IMR-90 (cell line): ENCODE measurements at regions of chr9 and their contacts with region 1.

Region 1: DNA sequence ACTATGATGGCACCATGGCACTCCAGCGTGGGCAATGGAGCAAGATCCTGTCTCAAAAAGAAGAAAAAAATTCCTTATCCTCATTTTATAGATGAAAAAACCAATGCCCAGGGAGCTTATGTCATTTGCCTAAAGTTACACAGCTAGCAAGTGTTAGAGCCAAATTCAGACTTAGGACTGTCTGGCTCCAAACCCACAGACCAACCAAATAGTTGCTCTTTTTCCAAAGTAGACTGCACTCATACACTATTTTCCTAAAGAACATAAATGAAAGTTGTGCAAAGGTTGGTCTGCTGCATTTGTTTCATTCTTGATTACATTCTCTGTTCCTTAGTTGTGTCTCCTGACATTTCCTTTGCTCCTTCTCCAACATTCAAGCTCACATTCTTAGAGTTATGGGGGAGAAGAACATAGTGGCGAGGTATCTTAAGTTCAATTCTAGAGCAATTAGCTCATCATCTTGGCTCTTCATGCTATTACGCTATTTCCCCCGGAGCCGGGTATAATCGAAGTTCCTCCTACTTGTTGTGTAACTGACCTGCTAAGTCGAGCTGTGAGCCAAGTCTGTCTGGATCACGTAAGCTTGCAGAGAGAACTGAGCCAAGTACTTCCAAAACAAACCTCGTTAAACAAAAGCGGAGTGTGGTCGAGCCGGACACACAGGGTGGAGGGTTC is 138.3 kb downstream of the RFK start:
- DNase-seq: peak; percentile 98
- ATAC-seq: peak; percentile 94
- H3K4me3 ChIP-seq: peak overlapping the region; percentile 21; the same call in 1 of the 2 replicates
- H3K27ac ChIP-seq: peak overlapping the region; percentile 90
- H3K4me1 ChIP-seq: peaks cover 7% of the 10 kb centered on the region
- H3K27me3 ChIP-seq: no peaks in the 10 kb centered on the region
- CTCF ChIP-seq: no peak
- POLR2A ChIP-seq: no peak
- RAD21 ChIP-seq: no peak

Region 2: GRCh38 chr9:76161541-76161940 is 94.4 kb before region 1 on chr9:
- CTCF ChIA-PET with region 1: no interaction called
- POLR2A ChIA-PET with region 1: no interaction called
- dilution Hi-C with region 1: no loop called
- in situ Hi-C with region 1: no loop called
- intact Hi-C with region 1: loop called (anchors 1 kb)
- DNase-seq: peak; percentile 95
- ATAC-seq: peak; percentile 82
- H3K4me3 ChIP-seq: no peak overlapping the region
- H3K27ac ChIP-seq: peak overlapping the region; percentile 65; the same call in 1 of the 2 replicates
- H3K4me1 ChIP-seq: peaks cover 19% of the 10 kb centered on the region
- H3K27me3 ChIP-seq: no peaks in the 10 kb centered on the region
- CTCF ChIP-seq: no peak
- POLR2A ChIP-seq: no peak
- RAD21 ChIP-seq: no peak

Region 3: DNA sequence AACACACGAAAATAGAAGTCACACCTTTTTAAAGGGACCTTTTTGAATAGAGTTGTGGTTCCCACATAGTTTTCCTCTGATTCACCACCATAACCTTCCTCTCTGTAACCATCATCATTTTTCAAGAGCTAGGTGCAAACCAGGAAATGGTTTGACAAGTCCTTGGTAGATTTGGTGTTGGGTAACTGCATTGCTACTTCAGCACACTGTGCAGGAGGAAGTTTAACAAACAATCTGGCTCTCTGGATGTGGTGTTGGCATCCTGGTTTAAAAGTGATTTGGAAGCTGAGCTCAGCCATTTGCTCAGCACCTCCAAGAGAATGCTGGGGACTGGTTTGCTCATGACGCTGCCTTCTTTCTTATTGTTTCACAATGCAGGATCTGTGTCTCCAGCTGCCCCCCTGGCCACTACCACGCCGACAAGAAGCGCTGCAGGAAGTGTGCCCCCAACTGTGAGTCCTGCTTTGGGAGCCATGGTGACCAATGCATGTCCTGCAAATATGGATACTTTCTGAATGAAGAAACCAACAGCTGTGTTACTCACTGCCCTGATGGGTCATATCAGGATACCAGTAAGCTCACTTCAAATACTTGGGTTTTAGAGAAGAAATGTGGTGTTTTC is 74.8 kb before region 1 on chr9:
- CTCF ChIA-PET with region 1: no interaction called
- POLR2A ChIA-PET with region 1: no interaction called
- dilution Hi-C with region 1: no loop called
- in situ Hi-C with region 1: no loop called
- intact Hi-C with region 1: loop called (anchors 2 kb)
- DNase-seq: peak; percentile 74
- ATAC-seq: peak; percentile 76
- H3K4me3 ChIP-seq: no peak overlapping the region
- H3K27ac ChIP-seq: peak overlapping the region; percentile 73
- H3K4me1 ChIP-seq: peaks cover 15% of the 10 kb centered on the region
- H3K27me3 ChIP-seq: no peaks in the 10 kb centered on the region
- CTCF ChIP-seq: no peak
- POLR2A ChIP-seq: no peak
- RAD21 ChIP-seq: no peak

Region 4: GRCh38 chr9:76216161-76216649 is 39.7 kb before region 1 on chr9:
- CTCF ChIA-PET with region 1: no interaction called
- POLR2A ChIA-PET with region 1: no interaction called
- dilution Hi-C with region 1: no loop called
- in situ Hi-C with region 1: no loop called
- intact Hi-C with region 1: loop called (anchors 2 kb)
- DNase-seq: peak; percentile 98
- ATAC-seq: peak; percentile 87
- H3K4me3 ChIP-seq: no peak overlapping the region
- H3K27ac ChIP-seq: peak overlapping the region; percentile 98
- H3K4me1 ChIP-seq: peaks cover 24% of the 10 kb centered on the region
- H3K27me3 ChIP-seq: no peaks in the 10 kb centered on the region
- CTCF ChIP-seq: no peak
- POLR2A ChIP-seq: no peak
- RAD21 ChIP-seq: no peak

Region 5: GRCh38 chr9:76297721-76298239 is 41.9 kb after region 1 on chr9:
- CTCF ChIA-PET with region 1: no interaction called
- POLR2A ChIA-PET with region 1: no interaction called
- dilution Hi-C with region 1: no loop called
- in situ Hi-C with region 1: no loop called
- intact Hi-C with region 1: loop called (anchors 5 kb)
- DNase-seq: peak; percentile 33
- ATAC-seq: peak; percentile 73
- H3K4me3 ChIP-seq: no peak overlapping the region
- H3K27ac ChIP-seq: peak overlapping the region; percentile 38; the same call in 1 of the 2 replicates
- H3K4me1 ChIP-seq: peaks cover 10% of the 10 kb centered on the region
- H3K27me3 ChIP-seq: no peaks in the 10 kb centered on the region
- CTCF ChIP-seq: no peak
- POLR2A ChIP-seq: no peak
- RAD21 ChIP-seq: no peak